Activated CD4-positive, alpha-beta T cell treated with anti-CD3 and anti-CD28 coated beads for 36 hours (primary cell): ENCODE measurements at regions of chr11 and their contacts with region 1.

Region 1: DNA sequence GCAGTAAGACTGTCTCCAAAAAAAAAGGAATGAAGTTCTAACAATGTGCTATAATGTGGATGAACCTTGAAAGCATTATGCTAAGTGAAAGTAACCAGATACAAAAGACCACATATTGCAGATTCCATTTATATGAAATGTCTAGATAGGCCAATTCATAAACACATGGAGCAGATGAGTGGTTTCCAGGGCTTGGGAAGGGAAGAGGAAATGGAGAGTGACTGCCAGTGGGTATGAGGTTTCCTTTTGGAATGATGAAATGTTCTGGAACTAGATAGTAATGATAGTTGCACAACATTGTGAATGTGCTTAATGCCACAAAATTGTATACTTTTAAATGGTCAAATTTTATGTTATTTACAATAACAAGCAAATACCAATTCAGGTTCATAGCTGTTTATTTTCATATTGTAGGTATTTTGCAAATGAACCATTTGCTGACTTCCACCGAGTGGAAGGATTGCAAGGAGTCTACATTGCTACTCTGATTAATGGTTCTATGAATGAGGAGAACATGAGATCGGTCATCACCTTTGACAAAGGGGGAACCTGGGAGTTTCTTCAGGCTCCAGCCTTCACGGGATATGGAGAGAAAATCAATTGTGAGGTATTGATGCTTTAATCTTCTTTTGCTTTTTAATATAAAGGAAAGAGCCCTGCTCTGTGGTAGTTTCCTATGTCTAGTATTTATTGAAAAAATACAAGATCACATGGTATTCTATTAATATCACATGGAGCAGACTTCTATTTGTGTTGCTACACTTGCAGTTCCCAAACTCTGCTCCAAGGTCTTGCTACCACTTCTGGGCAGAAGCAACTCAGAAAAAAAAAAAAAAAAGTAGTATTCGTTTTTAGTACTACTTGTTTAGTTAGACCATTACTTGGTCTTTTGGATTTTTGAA is 67.7 kb upstream of the SORL1-AS1 start:
- DNase-seq: no peak
- ATAC-seq: no peak
- H3K4me3 Mint-ChIP-seq: no peak overlapping the region
- H3K27ac Mint-ChIP-seq: peak overlapping the region; percentile 77
- H3K4me1 Mint-ChIP-seq: peaks cover 43% of the 10 kb centered on the region
- H3K27me3 Mint-ChIP-seq: no peaks in the 10 kb centered on the region

Region 2: GRCh38 chr11:121482231-121483129 is 38.0 kb before region 1 on chr11:
- CTCF ChIA-PET with region 1: no interaction called
- POLR2A ChIA-PET with region 1: no interaction called
- intact Hi-C with region 1: loop called in 1 of 2 experiments (anchors 1 kb)
- DNase-seq: peak; percentile 65
- ATAC-seq: peak; percentile 82
- H3K4me3 Mint-ChIP-seq: peak overlapping the region; percentile 70
- H3K27ac Mint-ChIP-seq: peak overlapping the region; percentile 96
- H3K4me1 Mint-ChIP-seq: peaks cover 51% of the 10 kb centered on the region
- H3K27me3 Mint-ChIP-seq: no peaks in the 10 kb centered on the region